ENCODE measurements at regions of chr12 and their contacts with region 1.

Region 1: GRCh38 chr12:6723607-6724396 is at the start of gene COPS7A:
- DNase-seq: peak; percentile 98
- H3K4me3 Mint-ChIP-seq: peak within 1 kb of the TSS; percentile 92
- H3K27ac Mint-ChIP-seq: peak within 1 kb of the TSS; percentile 91
- H3K4me1 Mint-ChIP-seq: peaks cover 33% of the 10 kb centered on the region
- H3K27me3 Mint-ChIP-seq: no peaks in the 10 kb centered on the region
- total RNA-seq, gene COPS7A: 34.6 and 36.2 TPM in 2 replicates

Region 2: GRCh38 chr12:6554168-6555017 is 169.4 kb before region 1 on chr12:
- intact Hi-C with region 1: loop called (anchors 1 kb)
- DNase-seq: no peak
- H3K4me3 Mint-ChIP-seq: peak overlapping the region; percentile 88
- H3K27ac Mint-ChIP-seq: peak overlapping the region; percentile 61
- H3K4me1 Mint-ChIP-seq: peaks cover 36% of the 10 kb centered on the region
- H3K27me3 Mint-ChIP-seq: no peaks in the 10 kb centered on the region

Region 3: DNA sequence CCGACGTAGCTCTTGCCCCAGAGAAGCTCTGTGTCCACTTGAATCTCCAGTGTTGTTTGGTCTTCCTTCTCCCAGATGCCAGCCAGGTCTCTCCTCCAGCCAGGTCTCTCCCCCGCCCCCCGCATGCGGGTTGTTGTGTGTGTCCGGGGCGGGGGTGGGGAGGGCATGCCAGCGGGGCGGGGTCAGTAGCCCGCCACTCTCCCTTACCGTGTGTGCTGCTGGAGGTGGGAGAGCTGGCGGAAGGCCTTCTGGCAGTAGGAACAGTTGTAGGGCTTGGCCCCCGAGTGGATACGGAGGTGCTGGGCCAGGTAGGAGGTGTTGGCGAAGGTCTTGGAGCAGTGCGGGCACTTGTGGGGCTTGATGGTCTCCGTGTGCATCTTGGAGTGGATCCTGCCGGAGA is 51.7 kb before region 1 on chr12:
- intact Hi-C with region 1: no loop called
- DNase-seq: no peak
- H3K4me3 Mint-ChIP-seq: no peak overlapping the region
- H3K27ac Mint-ChIP-seq: no peak overlapping the region
- H3K4me1 Mint-ChIP-seq: no peaks in the 10 kb centered on the region
- H3K27me3 Mint-ChIP-seq: no peaks in the 10 kb centered on the region

Region 4: GRCh38 chr12:6742834-6743233 is 19.0 kb after region 1 on chr12:
- intact Hi-C with region 1: loop called (anchors 1 kb)
- DNase-seq: no peak
- H3K4me3 Mint-ChIP-seq: no peak overlapping the region
- H3K27ac Mint-ChIP-seq: peak overlapping the region; percentile 27
- H3K4me1 Mint-ChIP-seq: peaks cover 27% of the 10 kb centered on the region
- H3K27me3 Mint-ChIP-seq: no peaks in the 10 kb centered on the region

Region 5: DNA sequence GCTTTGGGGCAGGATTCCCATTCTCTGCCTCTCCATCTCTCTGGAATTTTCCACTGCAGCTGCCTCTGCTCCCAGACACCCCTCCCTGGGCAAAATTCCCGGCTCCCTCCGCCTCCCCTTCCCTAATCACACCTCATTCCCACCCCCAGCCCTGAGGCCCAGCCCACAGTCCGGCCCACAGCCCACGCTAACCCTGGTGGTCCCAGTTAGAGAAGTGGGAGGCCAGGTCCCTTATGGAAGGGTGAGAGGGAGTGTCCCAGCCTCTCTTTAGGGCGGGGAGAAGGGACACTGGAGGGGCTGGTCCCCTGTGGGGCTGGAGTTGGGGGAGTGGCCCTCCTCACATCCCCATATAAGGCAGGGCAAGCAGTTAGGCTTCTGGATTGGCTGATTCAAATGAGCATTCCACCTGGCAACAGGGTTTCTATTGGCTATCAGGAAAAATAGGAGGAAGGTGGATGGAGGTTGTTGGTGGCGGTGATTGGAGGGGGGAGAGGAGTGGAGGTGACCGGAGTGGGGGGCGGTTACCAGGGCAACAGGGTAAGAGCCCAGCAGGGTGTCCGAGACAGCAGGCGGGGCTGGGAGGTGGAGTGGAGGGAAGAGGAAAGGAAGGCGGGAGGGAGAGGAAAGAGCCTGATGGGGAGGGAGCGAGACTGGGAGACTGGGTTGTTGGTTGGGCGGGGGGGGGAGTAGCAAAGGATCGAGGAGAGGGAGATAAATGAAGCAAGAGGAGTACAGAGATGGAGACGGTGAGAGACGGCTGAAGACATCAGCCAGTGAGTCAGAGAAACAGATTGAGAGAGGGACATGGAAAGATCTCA is 40.4 kb after region 1 on chr12:
- intact Hi-C with region 1: loop called (anchors 2 kb)
- DNase-seq: peak; percentile 64
- H3K4me3 Mint-ChIP-seq: peak overlapping the region; percentile 79
- H3K27ac Mint-ChIP-seq: peak overlapping the region; percentile 57
- H3K4me1 Mint-ChIP-seq: peaks cover 43% of the 10 kb centered on the region
- H3K27me3 Mint-ChIP-seq: peaks cover 21% of the 10 kb centered on the region

Region 6: GRCh38 chr12:6873094-6874014 is 149.6 kb after region 1 on chr12 and contains the start of gene SPSB2:
- intact Hi-C with region 1: loop called (anchors 1 kb)
- DNase-seq: peak; percentile 99
- H3K4me3 Mint-ChIP-seq: peak within 1 kb of the TSS; percentile 96
- H3K27ac Mint-ChIP-seq: peak within 1 kb of the TSS; percentile 86
- H3K4me1 Mint-ChIP-seq: peaks cover 56% of the 10 kb centered on the region
- H3K27me3 Mint-ChIP-seq: no peaks in the 10 kb centered on the region
- total RNA-seq, gene SPSB2: 3.4 and 4.7 TPM in 2 replicates

Region 7: GRCh38 chr12:6904280-6905278 is 180.8 kb after region 1 on chr12 and contains the start of gene LRRC23:
- intact Hi-C with region 1: no loop called
- DNase-seq: peak; percentile 97
- H3K4me3 Mint-ChIP-seq: no peak within 1 kb of the TSS
- H3K27ac Mint-ChIP-seq: no peak within 1 kb of the TSS
- H3K4me1 Mint-ChIP-seq: peaks cover 8% of the 10 kb centered on the region
- H3K27me3 Mint-ChIP-seq: no peaks in the 10 kb centered on the region
- total RNA-seq, gene LRRC23: 5.3 and 5.6 TPM in 2 replicates